ENCODE measurements at regions of chr11 and their contacts with region 1.

Region 1: DNA sequence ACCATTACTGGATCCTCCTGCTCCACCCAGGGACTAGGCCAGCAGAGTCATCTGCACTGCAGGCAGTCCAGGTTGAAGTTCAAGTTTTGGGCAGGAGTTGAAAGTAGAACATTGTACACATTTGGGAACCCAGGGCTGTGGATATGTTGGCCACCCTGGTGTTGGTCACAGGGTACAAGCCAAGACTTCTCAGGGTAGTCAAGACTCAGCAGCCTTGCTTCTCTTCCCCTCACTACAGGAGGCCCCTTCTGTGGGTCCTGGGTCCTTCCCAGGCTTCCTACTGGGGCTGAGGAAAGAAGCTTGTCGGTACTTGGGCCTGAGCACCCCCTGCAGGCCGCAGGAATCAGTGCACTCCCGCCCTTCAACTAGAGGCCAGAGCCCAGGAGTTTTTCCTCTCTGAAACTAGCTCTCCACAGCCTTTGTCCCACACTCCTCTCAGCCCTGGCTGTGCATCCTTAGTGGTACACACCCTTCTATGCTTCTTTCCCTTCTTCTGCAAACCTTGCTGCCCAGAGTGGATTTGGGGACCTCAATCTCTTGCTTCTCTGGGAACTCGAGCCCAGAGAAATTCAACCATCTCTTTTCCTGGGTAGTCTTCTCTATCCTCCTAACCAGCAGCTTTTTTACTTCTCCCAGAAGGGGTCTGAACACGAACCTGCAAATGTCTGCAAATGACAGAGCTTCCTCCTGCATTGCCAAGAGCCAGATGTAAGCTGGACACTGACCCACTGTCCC is 2.6 kb upstream of the HPX start:
- DNase-seq: peak; percentile 50 to 68 (median 60)
- H3K4me3 ChIP-seq: no peak overlapping the region
- H3K27ac ChIP-seq: no peak overlapping the region
- H3K4me1 ChIP-seq: peaks cover 0 to 5% (median under 1%) of the 10 kb centered on the region in 4 experiments
- H3K27me3 ChIP-seq: no peaks in the 10 kb centered on the region

Region 2: DNA sequence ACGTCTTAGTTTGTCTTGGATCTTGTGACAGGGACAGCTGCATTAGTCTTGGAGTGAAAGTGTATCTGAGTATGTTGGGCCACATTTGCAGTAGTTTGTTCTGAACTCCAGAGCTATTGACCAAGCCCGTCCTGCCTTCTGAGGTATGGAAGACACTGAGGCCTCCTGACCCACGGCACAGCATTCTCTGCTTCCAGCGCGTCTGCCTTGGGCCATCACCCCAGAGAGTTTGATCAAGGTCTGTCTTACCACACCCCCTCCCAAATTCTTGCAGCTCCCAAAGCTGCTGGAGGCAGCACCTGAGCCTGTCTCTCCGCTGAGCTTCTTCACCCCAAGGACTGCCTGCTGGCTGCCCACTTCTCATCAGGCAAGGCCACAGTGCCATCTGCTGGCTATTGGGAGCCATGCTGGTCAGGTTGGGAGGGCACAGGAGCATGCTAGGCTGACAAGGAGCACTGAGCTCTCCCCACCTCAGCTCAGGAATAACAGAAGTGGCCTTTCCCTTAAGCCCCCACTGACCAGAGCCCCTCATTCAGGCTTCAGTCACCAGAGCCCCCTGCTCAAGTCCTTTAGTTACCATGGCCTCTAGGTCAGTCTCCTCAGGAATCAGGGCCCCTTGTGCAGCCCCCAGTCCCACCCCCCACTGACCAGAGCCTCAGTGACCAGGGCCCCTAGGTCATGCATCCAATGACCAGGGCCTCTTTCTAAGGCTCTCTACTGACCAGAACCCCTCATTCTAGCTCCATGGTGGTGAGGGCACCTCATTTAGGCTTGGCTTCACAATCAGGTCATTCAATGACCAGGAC is 80.4 kb before region 1 on chr11:
- CTCF ChIA-PET with region 1: interaction called, 10 read pairs
- POLR2A ChIA-PET with region 1: no interaction called
- DNase-seq: peak; percentile 51 to 79 (median 74)
- H3K4me3 ChIP-seq: no peak overlapping the region
- H3K27ac ChIP-seq: no peak overlapping the region
- H3K4me1 ChIP-seq: no peaks in the 10 kb centered on the region
- H3K27me3 ChIP-seq: peaks cover 0 to 2% (median 0%) of the 10 kb centered on the region in 5 experiments

Region 3: DNA sequence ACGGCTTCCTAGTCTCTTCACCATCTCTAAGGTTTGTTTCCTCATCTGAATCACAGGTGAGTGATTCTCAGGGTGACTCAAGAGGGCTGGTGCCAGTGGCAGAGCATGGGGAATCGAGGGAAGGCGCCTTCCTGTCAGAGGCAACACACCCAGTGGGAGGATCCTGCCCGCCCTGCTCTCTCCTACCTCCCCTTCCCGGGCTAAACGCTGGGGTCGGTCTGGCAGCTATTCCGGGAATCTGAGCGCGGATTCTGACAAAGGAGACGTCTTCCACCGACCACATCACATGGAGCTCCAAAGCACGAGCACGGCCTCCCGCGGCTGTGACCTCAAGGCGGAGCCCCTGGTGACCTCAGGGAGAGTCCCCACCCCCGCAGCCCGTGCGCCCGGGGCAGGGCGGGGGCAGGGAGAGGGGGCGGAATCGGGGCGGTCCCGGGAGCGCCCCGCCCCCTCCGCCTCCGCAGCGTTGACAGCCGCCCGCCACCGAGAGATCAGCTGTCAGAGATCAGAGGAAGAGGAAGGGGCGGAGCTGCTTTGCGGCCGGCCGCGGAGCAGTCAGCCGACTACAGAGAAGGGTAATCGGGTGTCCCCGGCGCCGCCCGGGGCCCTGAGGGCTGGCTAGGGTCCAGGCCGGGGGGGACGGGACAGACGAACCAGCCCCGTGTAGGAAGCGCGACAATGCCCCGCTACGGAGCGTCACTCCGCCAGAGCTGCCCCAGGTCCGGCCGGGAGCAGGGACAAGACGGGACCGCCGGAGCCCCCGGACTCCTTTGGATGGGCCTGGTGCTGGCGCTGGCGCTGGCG is 53.3 kb before region 1 on chr11 and contains the start of gene SMPD1:
- CTCF ChIA-PET with region 1: interaction called, 464 read pairs
- POLR2A ChIA-PET with region 1: interaction called, 4 read pairs
- DNase-seq: peak; percentile 88 to 96 (median 95)
- H3K4me3 ChIP-seq: peak within 1 kb of the TSS; percentile 20 to 91 (median 75)
- H3K27ac ChIP-seq: peak within 1 kb of the TSS; percentile 25 to 76
- H3K4me1 ChIP-seq: peaks cover 5 to 23% (median 17%) of the 10 kb centered on the region in 4 experiments
- H3K27me3 ChIP-seq: no peaks in the 10 kb centered on the region

Region 4: GRCh38 chr11:6419009-6419631 is 24.3 kb before region 1 on chr11 and contains the start of gene APBB1:
- CTCF ChIA-PET with region 1: interaction called, 21 read pairs
- POLR2A ChIA-PET with region 1: no interaction called
- DNase-seq: peak; percentile 46 to 77 (median 72)
- H3K4me3 ChIP-seq: peak within 1 kb of the TSS; percentile 64 to 92 (median 82)
- H3K27ac ChIP-seq: peak within 1 kb of the TSS in 1 of 2 experiments; percentile 59
- H3K4me1 ChIP-seq: peaks cover 3 to 18% (median 13%) of the 10 kb centered on the region in 4 experiments
- H3K27me3 ChIP-seq: peaks cover 0 to 19% (median 1%) of the 10 kb centered on the region in 5 experiments

Region 5: DNA sequence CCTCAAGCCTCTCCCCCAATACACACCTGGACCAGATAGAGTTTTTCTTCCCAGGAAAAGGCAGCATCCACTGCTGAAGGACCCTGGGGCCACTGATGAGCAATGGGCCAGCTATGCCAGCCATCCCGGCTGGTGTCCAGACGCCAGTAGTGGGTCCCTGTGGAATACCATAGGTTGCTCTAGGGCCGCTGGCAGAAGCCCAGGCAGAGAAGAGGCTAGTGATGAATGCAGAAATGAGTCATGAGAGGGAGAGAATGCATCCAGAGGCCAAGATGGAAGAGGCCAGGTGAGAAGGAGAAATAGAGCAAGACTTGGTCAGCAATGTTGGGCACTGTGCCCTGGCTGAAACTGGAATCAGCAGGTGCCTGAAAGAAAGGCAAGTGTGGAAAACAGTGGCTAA is 11.6 kb before region 1 on chr11:
- CTCF ChIA-PET with region 1: interaction called, 11 read pairs
- POLR2A ChIA-PET with region 1: no interaction called
- DNase-seq: no peak
- H3K4me3 ChIP-seq: no peak overlapping the region
- H3K27ac ChIP-seq: no peak overlapping the region
- H3K4me1 ChIP-seq: no peaks in the 10 kb centered on the region
- H3K27me3 ChIP-seq: peaks cover 0 to 4% (median 0%) of the 10 kb centered on the region in 5 experiments

Region 6: DNA sequence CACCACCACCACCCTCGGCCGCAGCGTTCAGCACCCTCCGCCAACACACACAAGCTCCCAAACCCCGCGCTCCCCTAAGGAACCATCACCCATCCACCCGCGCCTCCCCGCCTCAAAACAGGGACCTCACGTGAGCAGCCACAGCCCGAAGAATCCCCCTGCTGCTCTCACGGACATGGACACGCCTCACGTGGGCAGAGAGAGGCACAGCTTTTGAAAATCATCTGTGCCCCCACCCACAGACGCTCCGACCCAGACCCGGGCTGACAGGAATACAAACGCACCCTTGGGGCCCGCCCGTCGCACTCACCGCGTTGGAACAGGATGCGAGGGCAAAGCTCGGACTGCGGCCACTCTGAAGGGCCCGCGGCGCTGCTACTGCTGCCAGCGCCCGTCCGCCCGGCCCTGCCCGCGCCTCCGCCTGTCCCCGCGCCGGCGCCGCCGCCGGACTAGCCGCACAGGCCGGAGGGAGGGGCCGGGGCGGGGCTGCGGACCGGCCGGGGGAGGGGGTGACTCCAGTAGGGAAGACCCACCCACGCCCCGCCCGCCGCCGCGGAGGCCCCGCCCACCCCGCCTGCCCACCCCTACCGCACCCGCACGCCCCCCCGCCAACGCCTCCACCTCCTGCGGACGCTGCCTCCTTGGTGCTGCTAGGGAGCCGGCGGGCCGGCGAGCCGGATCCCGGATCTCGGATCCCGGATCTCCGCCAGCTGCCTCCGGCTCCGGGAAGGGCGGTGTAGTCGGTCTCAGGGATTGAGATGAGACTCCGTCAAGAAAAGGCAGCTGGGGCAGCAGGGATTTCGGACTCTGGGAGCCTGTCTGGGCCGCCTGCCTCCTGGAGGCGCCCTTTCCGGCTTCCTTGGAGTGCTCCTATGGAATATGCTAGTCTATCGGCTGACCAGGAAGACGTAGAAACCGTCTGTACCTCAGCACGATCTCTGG is 30.3 kb after region 1 on chr11 and contains the start of gene TRIM3:
- CTCF ChIA-PET with region 1: interaction called, 13 read pairs
- POLR2A ChIA-PET with region 1: no interaction called
- DNase-seq: peak; percentile 69 to 73 (median 73)
- H3K4me3 ChIP-seq: peak within 1 kb of the TSS; percentile 67 to 91 (median 80)
- H3K27ac ChIP-seq: peak within 1 kb of the TSS in 1 of 2 experiments; percentile 54
- H3K4me1 ChIP-seq: peaks cover 10 to 39% (median 30%) of the 10 kb centered on the region in 4 experiments
- H3K27me3 ChIP-seq: no peaks in the 10 kb centered on the region

Region 7: GRCh38 chr11:6505577-6506240 is 62.3 kb after region 1 on chr11:
- CTCF ChIA-PET with region 1: interaction called, 20 read pairs
- POLR2A ChIA-PET with region 1: no interaction called
- DNase-seq: peak; percentile 47 to 67 (median 65)
- H3K4me3 ChIP-seq: no peak overlapping the region
- H3K27ac ChIP-seq: no peak overlapping the region
- H3K4me1 ChIP-seq: no peaks in the 10 kb centered on the region
- H3K27me3 ChIP-seq: no peaks in the 10 kb centered on the region

Region 8: DNA sequence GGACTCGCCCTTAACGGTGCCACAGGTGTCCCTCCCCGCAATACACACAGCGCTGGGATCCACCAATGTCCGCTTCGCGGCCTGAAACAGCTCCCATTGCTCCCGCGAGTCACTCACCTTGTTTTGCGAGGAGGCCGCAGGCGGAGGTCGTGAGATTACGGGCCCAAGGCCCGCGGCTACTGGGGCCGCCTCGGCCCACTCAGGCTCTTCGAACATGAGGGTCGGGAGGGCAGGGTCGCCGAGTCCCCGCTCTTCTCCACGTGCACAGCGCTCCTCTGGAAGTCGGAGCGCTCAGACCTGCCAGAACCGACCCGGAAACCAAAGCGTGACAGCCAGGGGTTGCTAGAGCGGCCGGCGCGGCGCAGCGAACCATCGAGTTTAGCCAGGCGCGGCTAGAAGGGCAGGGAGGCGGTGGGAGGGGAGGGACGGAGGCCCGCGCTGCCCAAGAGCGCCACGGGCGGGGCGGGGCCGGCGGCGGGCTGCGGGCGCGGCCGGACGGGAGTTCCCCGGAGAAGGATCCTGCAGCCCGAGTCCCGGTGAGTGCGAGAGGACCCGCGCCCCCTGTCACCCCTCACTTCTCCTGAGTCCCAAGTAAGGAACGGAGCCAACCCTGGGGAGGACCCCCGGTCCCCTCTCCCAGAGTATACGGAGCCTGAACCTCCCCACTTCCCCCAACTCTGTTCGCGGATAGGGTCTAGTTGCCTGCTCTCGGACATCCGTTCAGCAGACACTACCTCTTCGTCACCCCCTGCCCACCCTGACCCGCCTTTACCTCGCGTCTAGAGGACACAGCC is 160.0 kb after region 1 on chr11 and contains the starts of genes ILK and RRP8:
- CTCF ChIA-PET with region 1: no interaction called
- POLR2A ChIA-PET with region 1: no interaction called
- DNase-seq: peak; percentile 89 to 92 (median 90)
- H3K4me3 ChIP-seq: peak within 1 kb of the TSS; percentile 61 to 97 (median 86)
- H3K27ac ChIP-seq: peak within 1 kb of the TSS; percentile 82 to 87
- H3K4me1 ChIP-seq: peaks cover 34 to 67% (median 56%) of the 10 kb centered on the region in 4 experiments
- H3K27me3 ChIP-seq: no peaks in the 10 kb centered on the region